Left cardiac atrium (tissue), 4 donors: ENCODE measurements at regions of chr10 and their contacts with region 1.

Region 1: GRCh38 chr10:102167861-102168260 is 15.7 kb downstream of the NOLC1 start:
- DNase-seq: no peak
- ATAC-seq: no peak

Region 2: GRCh38 chr10:101968940-101969321 is 198.9 kb before region 1 on chr10:
- intact Hi-C with region 1: no loop called
- DNase-seq: no peak
- ATAC-seq: no peak

Region 3: GRCh38 chr10:102225646-102226541 is 58.0 kb after region 1 on chr10 and contains the start of gene ELOVL3:
- intact Hi-C with region 1: loop called (anchors 5 to 10 kb)
- DNase-seq: peak; percentile 96
- ATAC-seq: peak; percentile 96 to 97
- total RNA-seq, gene ELOVL3: 1.3 TPM in 1 of 2 donors, not detected in the other

Region 4: DNA sequence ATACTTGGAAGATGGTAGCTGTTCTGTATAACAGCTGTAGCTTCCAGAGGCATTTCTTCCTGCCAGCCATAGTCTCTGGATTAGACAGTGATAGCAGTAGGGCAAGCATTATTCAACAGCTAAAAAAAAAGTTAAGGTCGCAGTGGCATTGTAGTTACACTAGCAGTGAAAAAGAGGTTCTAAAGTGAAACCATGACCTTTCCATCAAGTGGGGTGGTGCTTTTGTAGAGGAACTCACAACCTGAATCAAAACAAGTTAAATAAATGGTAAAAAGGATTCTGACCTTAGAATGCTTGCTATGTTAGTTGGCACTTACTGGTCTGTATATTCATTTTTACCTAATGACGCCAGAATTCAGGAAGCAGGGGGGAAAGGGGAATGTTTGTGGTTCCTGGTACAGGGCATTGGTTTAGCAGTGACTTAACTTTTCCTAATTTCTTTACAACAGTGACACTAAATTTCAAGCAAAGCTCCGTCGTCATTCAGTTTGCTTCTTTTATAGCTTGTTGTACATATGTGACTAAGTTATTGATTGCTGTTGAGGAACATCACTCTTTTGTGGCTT is 132.5 kb after region 1 on chr10:
- intact Hi-C with region 1: no loop called
- DNase-seq: no peak
- ATAC-seq: peak; percentile 63 to 83

Region 5: DNA sequence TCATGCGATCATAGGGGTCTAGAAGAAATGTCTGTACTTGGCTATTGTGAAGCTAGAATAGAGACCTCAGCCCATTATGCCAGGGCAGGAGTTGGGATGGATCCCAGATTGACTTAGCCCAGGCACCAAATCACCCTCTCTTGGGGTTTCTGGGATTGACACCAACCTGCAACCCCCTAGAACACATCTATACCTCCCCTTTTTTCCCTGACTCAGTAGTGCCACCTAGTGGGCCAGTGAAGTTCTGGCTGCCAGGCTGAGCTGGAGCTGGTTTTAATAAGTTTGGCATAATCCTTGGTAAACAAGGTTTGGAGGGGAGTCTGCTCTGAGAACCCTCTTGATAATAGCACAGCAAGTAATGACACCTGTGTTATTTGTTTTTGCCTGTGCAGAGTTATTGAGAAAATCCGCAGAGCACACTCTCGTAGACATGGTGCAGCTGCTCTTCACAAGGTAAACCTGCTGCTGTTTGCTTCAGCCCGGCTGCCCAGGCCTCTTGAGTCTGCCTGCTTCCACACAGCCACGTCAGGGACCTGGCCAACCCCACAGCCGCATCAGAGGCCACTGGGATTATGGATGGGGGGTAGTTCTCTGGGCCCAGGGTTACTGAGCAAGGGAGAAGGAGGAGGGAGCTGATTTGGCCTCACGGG is 184.3 kb after region 1 on chr10:
- intact Hi-C with region 1: loop called in 1 of 2 experiments (anchors 5 kb)
- DNase-seq: peak; percentile 44
- ATAC-seq: peak; percentile 65 to 72

Region 6: DNA sequence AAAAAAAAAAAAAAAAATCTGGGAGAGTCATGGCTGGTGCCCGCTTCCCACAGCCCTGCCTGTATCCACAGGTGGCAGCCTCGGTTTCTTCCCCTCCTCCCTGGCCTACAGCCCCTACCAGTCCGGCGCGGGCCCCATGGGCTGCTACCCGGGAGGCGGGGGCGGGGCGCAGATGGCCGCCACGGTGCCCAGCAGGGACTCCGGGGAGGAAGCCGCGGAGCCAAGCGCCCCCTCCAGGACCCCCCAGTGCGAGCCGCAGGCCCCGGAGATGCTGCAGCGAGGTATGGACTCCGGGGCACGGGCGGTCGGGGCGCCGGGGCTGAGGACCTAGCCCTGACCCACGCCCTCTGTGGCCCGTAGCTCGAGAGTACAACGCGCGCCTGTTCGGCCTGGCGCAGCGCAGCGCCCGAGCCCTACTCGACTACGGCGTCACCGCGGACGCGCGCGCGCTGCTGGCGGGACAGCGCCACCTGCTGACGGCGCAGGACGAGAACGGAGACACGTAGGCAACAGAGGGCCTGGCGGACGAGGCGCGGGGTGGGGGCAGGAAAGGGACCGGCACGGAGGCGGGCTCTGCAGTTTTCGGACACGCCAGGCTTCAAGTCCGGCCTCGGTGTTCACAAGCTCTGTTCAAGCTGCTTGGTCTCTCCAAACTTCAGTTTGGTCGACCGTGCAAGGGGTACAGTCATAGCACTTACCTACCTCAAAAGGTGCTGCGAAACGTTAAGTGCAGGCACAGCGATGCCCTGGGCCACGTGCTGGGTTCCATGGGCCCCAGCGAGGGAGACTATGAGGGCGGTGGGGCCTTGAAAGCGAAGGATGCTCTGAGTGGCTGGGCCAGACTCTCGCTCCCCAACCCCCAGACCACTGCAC is 231.6 kb after region 1 on chr10:
- intact Hi-C with region 1: loop called in 1 of 2 experiments (anchors 5 kb)
- DNase-seq: peak; percentile 93
- ATAC-seq: peak; percentile 69 to 83

Region 7: DNA sequence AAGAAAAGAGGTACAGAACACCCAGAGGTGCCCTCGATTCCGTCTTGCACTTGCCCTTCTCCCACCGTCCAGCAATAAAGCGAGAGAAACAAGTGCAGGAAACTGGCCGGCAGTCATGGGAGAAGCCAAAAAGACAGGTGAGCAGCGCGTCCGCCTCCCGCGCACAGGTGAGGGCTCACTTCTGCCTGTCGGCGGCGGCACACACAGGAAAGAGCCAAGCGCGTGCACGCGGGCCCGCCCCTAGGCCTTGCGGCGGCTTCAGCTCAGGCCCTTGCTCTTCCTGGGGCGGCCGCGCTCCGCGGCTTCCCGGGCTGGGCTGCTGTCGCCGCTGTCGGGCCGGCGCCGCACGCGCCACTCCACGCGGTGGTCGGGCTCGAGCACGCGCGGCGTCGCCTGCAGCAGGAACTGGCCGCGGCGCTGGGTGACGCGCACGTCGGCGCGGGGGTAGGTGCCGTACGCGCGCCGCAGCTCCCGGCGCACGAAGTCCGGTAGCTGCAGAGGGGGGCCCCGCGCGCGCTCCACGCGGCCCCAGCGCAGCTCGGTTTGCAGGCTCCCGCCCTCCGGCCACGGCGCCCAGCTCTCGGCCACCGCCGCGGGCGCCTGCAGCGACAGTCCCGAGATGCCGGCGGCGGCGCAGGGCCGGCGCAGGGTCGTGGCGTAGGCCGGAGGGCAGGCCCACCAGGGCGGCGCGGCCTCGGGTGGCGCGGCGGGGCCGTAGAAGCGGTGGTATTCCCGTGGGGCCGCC is 282.5 kb after region 1 on chr10:
- intact Hi-C with region 1: no loop called
- DNase-seq: peak; percentile 89
- ATAC-seq: peak; percentile 90 to 96

Region 8: GRCh38 chr10:102583435-102584417 is 415.9 kb after region 1 on chr10:
- intact Hi-C with region 1: loop called in 1 of 2 experiments (anchors 10 kb)
- DNase-seq: peak; percentile 88
- ATAC-seq: peak; percentile 92 to 93